ENCODE measurements at regions of chr16 and their contacts with region 1.

Region 1: GRCh38 chr16:23435500-23435899 is 17.5 kb downstream of the COG7 start:
- DNase-seq: peak; percentile 48
- ATAC-seq: peak; percentile 94
- H3K4me3 ChIP-seq: no peak overlapping the region
- H3K27ac ChIP-seq: no peak overlapping the region
- H3K4me1 ChIP-seq: no peaks in the 10 kb centered on the region
- H3K27me3 ChIP-seq: no peaks in the 10 kb centered on the region
- CTCF ChIP-seq: peak; percentile 84
- POLR2A ChIP-seq: no peak
- RAD21 ChIP-seq: peak; percentile 56

Region 2: GRCh38 chr16:22898874-22899348 is 536.6 kb before region 1 on chr16:
- CTCF ChIA-PET with region 1: interaction called, 4 read pairs
- POLR2A ChIA-PET with region 1: no interaction called
- dilution Hi-C with region 1: no loop called
- in situ Hi-C with region 1: loop called (anchors 10 kb)
- intact Hi-C with region 1: loop called (anchors 1 kb)
- DNase-seq: peak; percentile 56
- ATAC-seq: peak; percentile 62
- H3K4me3 ChIP-seq: no peak overlapping the region
- H3K27ac ChIP-seq: no peak overlapping the region
- H3K4me1 ChIP-seq: no peaks in the 10 kb centered on the region
- H3K27me3 ChIP-seq: no peaks in the 10 kb centered on the region; the same call in 1 of the 2 replicates
- CTCF ChIP-seq: peak; percentile 70
- POLR2A ChIP-seq: no peak
- RAD21 ChIP-seq: peak; percentile 70

Region 3: DNA sequence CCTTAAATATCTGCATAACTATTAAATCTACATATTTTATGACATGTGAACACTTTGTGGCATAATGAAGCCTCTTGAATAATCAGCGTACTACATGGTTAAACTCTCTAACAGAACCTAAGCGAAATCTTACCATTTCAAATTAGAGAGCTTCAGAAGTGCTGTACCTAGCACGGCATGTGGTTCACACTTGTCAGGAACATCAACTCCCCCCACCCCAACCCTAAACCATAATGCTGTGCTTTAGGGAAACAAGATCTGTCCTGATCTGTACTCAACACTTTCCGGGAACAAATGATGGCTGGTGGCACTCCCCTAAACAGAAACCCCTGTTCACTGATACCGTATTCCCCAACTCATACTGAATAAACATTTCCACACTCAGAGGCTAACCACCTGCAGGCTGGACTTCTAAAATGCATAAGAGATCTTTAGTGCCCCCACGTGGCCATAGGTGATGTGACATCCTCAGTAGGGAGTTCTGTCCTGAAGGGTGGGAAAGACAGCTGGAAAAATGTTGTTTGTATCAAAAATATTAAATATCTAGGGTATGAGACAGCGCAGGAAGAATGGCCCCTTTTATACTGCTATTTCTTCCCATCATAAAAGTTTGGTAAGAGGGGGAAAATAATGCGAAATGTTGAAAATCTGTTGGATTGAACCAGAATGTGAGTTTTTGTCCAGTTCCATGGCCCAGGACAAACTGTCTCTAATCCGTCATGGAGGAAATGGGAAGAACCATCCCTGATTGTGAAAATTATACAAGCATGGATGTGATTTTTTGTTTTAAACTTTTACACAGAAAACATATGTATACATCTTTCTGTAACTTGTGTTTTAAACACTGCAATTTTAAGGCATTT is 374.8 kb before region 1 on chr16:
- CTCF ChIA-PET with region 1: interaction called, 7 read pairs
- POLR2A ChIA-PET with region 1: no interaction called
- dilution Hi-C with region 1: no loop called
- in situ Hi-C with region 1: no loop called
- intact Hi-C with region 1: loop called (anchors 2 kb)
- DNase-seq: peak; percentile 77
- ATAC-seq: peak; percentile 96
- H3K4me3 ChIP-seq: no peak overlapping the region
- H3K27ac ChIP-seq: no peak overlapping the region
- H3K4me1 ChIP-seq: no peaks in the 10 kb centered on the region
- H3K27me3 ChIP-seq: no peaks in the 10 kb centered on the region; the same call in 1 of the 2 replicates
- CTCF ChIP-seq: peak; percentile 79
- POLR2A ChIP-seq: no peak
- RAD21 ChIP-seq: peak; percentile 66

Region 4: GRCh38 chr16:23182460-23183309 is 252.8 kb before region 1 on chr16 and contains the start of gene SCNN1G:
- CTCF ChIA-PET with region 1: interaction called, 5 read pairs
- POLR2A ChIA-PET with region 1: no interaction called
- dilution Hi-C with region 1: no loop called
- in situ Hi-C with region 1: loop called (anchors 10 kb)
- intact Hi-C with region 1: loop called (anchors 1 kb)
- DNase-seq: peak; percentile 25
- ATAC-seq: peak; percentile 98
- H3K4me3 ChIP-seq: no peak within 1 kb of the TSS
- H3K27ac ChIP-seq: no peak within 1 kb of the TSS
- H3K4me1 ChIP-seq: no peaks in the 10 kb centered on the region
- H3K27me3 ChIP-seq: peaks cover 40% of the 10 kb centered on the region
- CTCF ChIP-seq: peak; percentile 86
- POLR2A ChIP-seq: no peak
- RAD21 ChIP-seq: peak; percentile 69
- total RNA-seq, gene SCNN1G: not detected in 2 replicates